Activated CD4-positive, alpha-beta memory T cell treated with anti-CD3 and anti-CD28 coated beads for 36 hours (primary cell): ENCODE measurements at regions of chr3 and their contacts with region 1.

Region 1: GRCh38 chr3:143101792-143102381 is 17.7 kb upstream of the CHST2 start:
- DNase-seq: no peak
- H3K4me3 Mint-ChIP-seq: no peak overlapping the region
- H3K27ac Mint-ChIP-seq: no peak overlapping the region
- H3K4me1 Mint-ChIP-seq: peaks cover 15% of the 10 kb centered on the region
- H3K27me3 Mint-ChIP-seq: peaks cover 32% of the 10 kb centered on the region

Region 2: DNA sequence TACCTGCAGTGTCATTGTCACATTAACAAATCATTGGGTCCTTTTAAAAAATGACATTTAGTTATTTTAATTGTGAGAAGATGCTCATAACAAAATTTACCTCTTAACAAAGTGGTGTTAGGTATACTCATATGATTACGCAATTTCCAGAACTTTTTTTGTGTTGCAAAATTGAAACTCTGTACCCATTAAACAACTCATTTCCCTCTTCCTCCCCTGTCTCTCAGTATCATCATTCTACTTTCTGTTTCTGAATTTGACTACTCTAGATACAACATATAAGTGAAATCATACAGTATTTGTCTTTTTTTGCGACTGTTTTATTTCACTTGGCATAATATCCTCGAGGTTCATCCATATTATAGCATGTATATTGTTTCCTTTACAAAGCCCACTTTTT is 41.0 kb before region 1 on chr3:
- CTCF ChIA-PET with region 1: no interaction called
- POLR2A ChIA-PET with region 1: no interaction called
- intact Hi-C with region 1: loop called (anchors 1 kb)
- DNase-seq: no peak
- H3K4me3 Mint-ChIP-seq: no peak overlapping the region
- H3K27ac Mint-ChIP-seq: peak overlapping the region; percentile 42
- H3K4me1 Mint-ChIP-seq: peaks cover 22% of the 10 kb centered on the region
- H3K27me3 Mint-ChIP-seq: no peaks in the 10 kb centered on the region

Region 3: GRCh38 chr3:143084856-143085731 is 16.8 kb before region 1 on chr3:
- CTCF ChIA-PET with region 1: no interaction called
- POLR2A ChIA-PET with region 1: interaction called, 7 read pairs
- intact Hi-C with region 1: loop called (anchors 1 kb)
- DNase-seq: peak; percentile 36
- H3K4me3 Mint-ChIP-seq: peak overlapping the region; percentile 40
- H3K27ac Mint-ChIP-seq: no peak overlapping the region
- H3K4me1 Mint-ChIP-seq: peaks cover 34% of the 10 kb centered on the region
- H3K27me3 Mint-ChIP-seq: peaks cover 6% of the 10 kb centered on the region

Region 4: GRCh38 chr3:143179603-143180002 is 77.7 kb after region 1 on chr3:
- CTCF ChIA-PET with region 1: no interaction called
- POLR2A ChIA-PET with region 1: no interaction called
- intact Hi-C with region 1: no loop called
- DNase-seq: no peak
- H3K4me3 Mint-ChIP-seq: no peak overlapping the region
- H3K27ac Mint-ChIP-seq: no peak overlapping the region
- H3K4me1 Mint-ChIP-seq: peaks cover 2% of the 10 kb centered on the region
- H3K27me3 Mint-ChIP-seq: no peaks in the 10 kb centered on the region